Naive thymus-derived CD8-positive, alpha-beta T cell (primary cell): ENCODE measurements at regions of chr2 and their contacts with region 1.

Region 1: DNA sequence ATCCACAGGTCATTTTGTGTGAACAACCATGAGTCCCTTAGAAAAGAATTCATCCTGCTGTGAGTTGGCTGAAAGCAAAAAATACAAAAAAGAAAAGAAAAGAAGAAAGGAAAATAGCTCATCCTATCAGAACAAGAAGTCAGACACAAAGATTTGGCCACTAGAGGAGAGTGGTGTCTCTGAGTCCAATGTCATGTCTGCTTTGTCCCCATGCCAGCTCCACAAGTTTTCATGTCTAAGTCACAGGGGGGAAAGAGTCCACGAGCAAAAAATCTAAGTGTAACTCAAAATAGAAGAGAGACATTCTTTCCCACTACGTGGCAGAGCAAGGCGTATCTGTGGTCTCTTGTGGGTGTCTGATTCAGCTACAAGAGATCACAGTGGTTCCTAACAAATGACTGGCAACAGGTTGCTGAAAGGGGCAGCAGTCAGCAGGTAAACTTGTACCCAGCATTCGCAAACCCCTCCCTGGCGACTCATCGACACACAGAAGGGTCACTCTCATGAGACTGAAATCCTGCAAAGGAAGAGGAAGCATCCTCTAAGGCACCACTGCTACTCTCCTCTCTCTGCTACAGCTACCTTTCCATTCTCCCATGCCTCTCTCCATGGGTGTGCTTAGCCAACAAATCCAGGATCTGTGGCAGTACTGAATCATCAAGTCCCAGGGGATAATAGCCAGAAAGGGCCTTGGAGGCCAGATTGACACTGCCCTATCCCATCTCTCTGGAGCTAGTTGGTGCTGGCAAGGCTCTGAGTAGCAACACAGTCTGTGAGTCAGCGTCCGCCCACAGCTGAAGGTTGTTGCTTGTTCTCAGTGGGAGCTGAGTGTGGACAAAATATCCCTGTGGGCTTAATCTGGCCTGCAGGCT is 123.0 kb upstream of the SLC39A10 start:
- DNase-seq: peak in 8 of 10 donors; percentile 15 to 71 (median 44)
- ATAC-seq: peak; percentile 43 to 66
- H3K4me3 Mint-ChIP-seq: peak overlapping the region; percentile 69 to 92 (median 88)
- H3K27ac Mint-ChIP-seq: peak overlapping the region; percentile 84 to 100 (median 98)
- H3K4me1 Mint-ChIP-seq: peaks cover 33 to 85% (median 82%) of the 10 kb centered on the region in 4 donors
- H3K27me3 Mint-ChIP-seq: no peaks in the 10 kb centered on the region

Region 2: DNA sequence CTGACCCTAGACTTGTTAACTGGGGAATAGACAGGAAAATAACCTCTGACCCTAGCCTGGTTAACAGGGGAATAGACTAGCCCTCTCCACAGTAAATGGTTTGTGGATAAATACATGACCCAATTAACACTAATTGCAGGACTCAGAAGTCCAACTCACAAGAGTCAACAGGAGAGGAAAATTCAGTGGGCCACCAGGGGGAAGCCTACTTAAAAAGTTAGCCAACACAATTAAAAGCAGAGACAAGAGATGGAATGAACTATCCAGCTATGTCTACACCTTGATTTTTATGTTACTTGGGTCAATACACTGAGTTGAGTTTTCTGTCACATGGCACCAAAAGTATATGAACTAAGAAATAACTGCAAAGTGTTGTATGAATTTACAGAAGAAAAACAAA is 35.8 kb before region 1 on chr2:
- POLR2A ChIA-PET with region 1: interaction called, 14 read pairs
- DNase-seq: peak; percentile 17 to 81 (median 48)
- ATAC-seq: peak in 1 of 2 donors; percentile 76
- H3K4me3 Mint-ChIP-seq: peak overlapping the region in 1 of 10 donors; percentile 1
- H3K27ac Mint-ChIP-seq: peak overlapping the region in 6 of 10 donors; percentile 17 to 63 (median 38)
- H3K4me1 Mint-ChIP-seq: peaks cover 18 to 50% (median 36%) of the 10 kb centered on the region in 4 donors
- H3K27me3 Mint-ChIP-seq: no peaks in the 10 kb centered on the region

Region 3: DNA sequence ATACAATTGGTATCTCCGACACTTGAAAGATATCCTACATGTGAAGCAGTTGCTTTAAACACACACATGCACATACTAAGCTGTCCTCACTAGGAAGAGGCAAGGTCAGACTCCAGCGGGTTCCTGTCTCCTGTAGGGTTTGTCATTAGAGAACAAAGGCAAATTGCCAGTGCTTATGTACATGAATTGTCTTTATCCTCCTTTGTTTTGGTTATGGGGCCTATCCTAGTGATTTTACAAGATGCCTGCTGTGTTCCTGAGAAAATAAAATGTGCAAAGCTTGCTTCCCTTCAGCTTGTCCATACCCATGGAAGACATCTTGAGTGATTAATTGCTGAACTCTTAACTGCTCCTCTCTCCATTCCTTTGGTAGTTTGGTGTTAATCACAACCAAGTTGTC is 36.3 kb after region 1 on chr2:
- POLR2A ChIA-PET with region 1: interaction called, 14 read pairs
- DNase-seq: no peak
- ATAC-seq: no peak
- H3K4me3 Mint-ChIP-seq: no peak overlapping the region
- H3K27ac Mint-ChIP-seq: peak overlapping the region in 4 of 10 donors; percentile 53 to 78 (median 58)
- H3K4me1 Mint-ChIP-seq: peaks cover 14 to 47% (median 42%) of the 10 kb centered on the region in 4 donors
- H3K27me3 Mint-ChIP-seq: no peaks in the 10 kb centered on the region

Region 4: GRCh38 chr2:195575879-195576401 is 41.9 kb after region 1 on chr2:
- POLR2A ChIA-PET with region 1: interaction called, 14 read pairs
- DNase-seq: peak in 6 of 10 donors; percentile 3 to 36 (median 22)
- ATAC-seq: peak; percentile 72 to 73
- H3K4me3 Mint-ChIP-seq: peak overlapping the region; percentile 43 to 77 (median 64)
- H3K27ac Mint-ChIP-seq: peak overlapping the region; percentile 47 to 94 (median 84)
- H3K4me1 Mint-ChIP-seq: peaks cover 30 to 71% (median 67%) of the 10 kb centered on the region in 4 donors
- H3K27me3 Mint-ChIP-seq: no peaks in the 10 kb centered on the region